Heart right ventricle (tissue), 16 donors: ENCODE measurements at regions of chr6 and their contacts with region 1.

Region 1: DNA sequence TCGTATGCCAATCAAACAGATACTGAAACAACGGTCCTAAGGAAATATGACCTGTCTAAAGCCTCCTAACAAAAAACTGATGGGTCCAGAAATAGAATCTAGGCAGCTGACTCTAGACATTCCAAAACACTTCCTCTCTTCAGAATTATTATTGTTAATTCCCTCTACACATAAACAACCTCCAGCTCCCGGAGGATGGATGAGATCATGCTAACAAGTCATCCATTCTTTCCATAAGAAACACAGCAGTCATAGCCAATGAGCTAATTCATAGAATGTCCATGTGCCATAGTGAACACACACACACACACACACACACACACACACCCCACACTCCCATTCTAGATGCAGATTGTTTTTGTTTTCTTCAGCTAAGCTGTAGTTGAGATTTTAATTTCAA is 44.3 kb downstream of the HDGFL1 start:
- DNase-seq: peak in 1 of 2 donors; percentile 32
- ATAC-seq: peak in 7 of 8 donors; percentile 58 to 91 (median 85)
- H3K4me3 ChIP-seq: no peak overlapping the region
- H3K27ac ChIP-seq: peak overlapping the region in 5 of 10 donors; percentile 33 to 69 (median 63)
- H3K4me1 ChIP-seq: peaks cover 3 to 36% (median 21%) of the 10 kb centered on the region in 9 donors
- H3K27me3 ChIP-seq: no peaks in the 10 kb centered on the region
- CTCF ChIP-seq: no peak

Region 2: DNA sequence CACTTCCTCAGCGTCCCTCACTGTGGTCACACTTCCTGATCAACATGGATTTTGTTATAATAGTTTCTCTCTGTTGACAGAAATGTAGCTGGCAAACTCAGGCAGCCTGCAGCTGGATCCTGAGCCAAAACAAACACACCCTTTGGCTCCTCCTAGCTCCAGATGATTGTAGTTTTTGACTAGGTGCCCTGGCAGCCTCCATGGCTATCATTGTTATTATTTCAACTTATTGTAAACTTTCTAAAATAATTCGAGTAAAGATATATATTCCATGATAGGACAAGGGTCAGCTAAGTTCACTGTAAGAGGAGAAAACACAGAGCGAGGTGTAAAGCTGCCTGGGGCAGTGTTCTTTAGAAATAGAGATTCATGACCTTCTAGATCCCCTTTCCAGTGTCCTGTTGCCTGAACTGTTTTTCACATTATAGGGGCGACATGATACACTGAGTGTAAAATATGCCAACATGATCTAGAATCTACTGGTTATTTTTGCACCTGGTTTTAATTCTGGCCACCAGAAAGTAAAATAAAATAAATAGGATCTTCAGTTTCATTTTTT is 142.5 kb before region 1 on chr6:
- intact Hi-C with region 1: loop called in 1 of 10 experiments (anchors 5 kb)
- DNase-seq: peak in 1 of 2 donors; percentile 72
- ATAC-seq: peak; percentile 85 to 93 (median 90)
- H3K4me3 ChIP-seq: peak overlapping the region in 2 of 10 donors; percentile 17
- H3K27ac ChIP-seq: peak overlapping the region in 9 of 10 donors; percentile 10 to 80 (median 48)
- H3K4me1 ChIP-seq: peaks cover 0 to 48% (median 25%) of the 10 kb centered on the region in 9 donors
- H3K27me3 ChIP-seq: no peaks in the 10 kb centered on the region
- CTCF ChIP-seq: peak in 7 of 9 donors; percentile 11 to 63 (median 27)